ENCODE measurements at regions of chr19 and their contacts with region 1.

Region 1: GRCh38 chr19:17947815-17948513 is 15.1 kb downstream of the CCDC124 start:
- DNase-seq: peak; percentile 92 to 96 (median 96)
- H3K4me3 ChIP-seq: peak overlapping the region in 5 of 7 experiments; percentile 41 to 79 (median 66)
- H3K27ac ChIP-seq: no peak overlapping the region
- H3K4me1 ChIP-seq: peaks cover 3 to 55% (median 54%) of the 10 kb centered on the region in 4 experiments
- H3K27me3 ChIP-seq: peaks cover 0 to 44% (median 24%) of the 10 kb centered on the region in 5 experiments

Region 2: GRCh38 chr19:18000935-18001778 is 53.2 kb after region 1 on chr19:
- CTCF ChIA-PET with region 1: interaction called, 86 read pairs
- POLR2A ChIA-PET with region 1: interaction called, 9 read pairs
- DNase-seq: peak; percentile 92 to 96 (median 94)
- H3K4me3 ChIP-seq: peak overlapping the region; percentile 55 to 83 (median 75)
- H3K27ac ChIP-seq: peak overlapping the region; percentile 33 to 82
- H3K4me1 ChIP-seq: peaks cover 0 to 29% (median 23%) of the 10 kb centered on the region in 4 experiments
- H3K27me3 ChIP-seq: no peaks in the 10 kb centered on the region